B cell (primary cell): ENCODE measurements at regions of chr1 and their contacts with region 1.

Region 1: GRCh38 chr1:227999056-227999930 is 7.5 kb upstream of the WNT3A start:
- DNase-seq: peak; percentile 71
- ATAC-seq: peak; percentile 82
- H3K4me3 ChIP-seq: no peak overlapping the region
- H3K4me3 Mint-ChIP-seq: no peak overlapping the region
- H3K27ac ChIP-seq: no peak overlapping the region
- H3K27ac Mint-ChIP-seq: no peak overlapping the region
- H3K4me1 ChIP-seq: no peaks in the 10 kb centered on the region
- H3K4me1 Mint-ChIP-seq: no peaks in the 10 kb centered on the region
- H3K27me3 ChIP-seq: peaks cover 0 to 20% (median 10%) of the 10 kb centered on the region in 4 experiments
- H3K27me3 Mint-ChIP-seq: peaks cover 29% of the 10 kb centered on the region
- CTCF ChIP-seq: peak; percentile 72

Region 2: GRCh38 chr1:228165372-228166169 is 166.3 kb after region 1 on chr1 and contains the start of gene IBA57:
- CTCF ChIA-PET with region 1: interaction called, 10 read pairs
- POLR2A ChIA-PET with region 1: no interaction called
- intact Hi-C with region 1: no loop called
- DNase-seq: peak; percentile 100
- ATAC-seq: peak; percentile 84
- H3K4me3 ChIP-seq: peak within 1 kb of the TSS; percentile 64 to 88 (median 74)
- H3K4me3 Mint-ChIP-seq: peak within 1 kb of the TSS; percentile 93
- H3K27ac ChIP-seq: peak within 1 kb of the TSS; percentile 95 to 98
- H3K27ac Mint-ChIP-seq: peak within 1 kb of the TSS; percentile 99
- H3K4me1 ChIP-seq: peaks cover 14 to 26% of the 10 kb centered on the region in 2 donors
- H3K4me1 Mint-ChIP-seq: peaks cover 28% of the 10 kb centered on the region
- H3K27me3 ChIP-seq: peaks cover 0 to 5% (median 0%) of the 10 kb centered on the region in 4 experiments
- H3K27me3 Mint-ChIP-seq: no peaks in the 10 kb centered on the region
- CTCF ChIP-seq: peak; percentile 73
- total RNA-seq, gene IBA57: 12.8 and 15.3 TPM in 2 replicates

Region 3: DNA sequence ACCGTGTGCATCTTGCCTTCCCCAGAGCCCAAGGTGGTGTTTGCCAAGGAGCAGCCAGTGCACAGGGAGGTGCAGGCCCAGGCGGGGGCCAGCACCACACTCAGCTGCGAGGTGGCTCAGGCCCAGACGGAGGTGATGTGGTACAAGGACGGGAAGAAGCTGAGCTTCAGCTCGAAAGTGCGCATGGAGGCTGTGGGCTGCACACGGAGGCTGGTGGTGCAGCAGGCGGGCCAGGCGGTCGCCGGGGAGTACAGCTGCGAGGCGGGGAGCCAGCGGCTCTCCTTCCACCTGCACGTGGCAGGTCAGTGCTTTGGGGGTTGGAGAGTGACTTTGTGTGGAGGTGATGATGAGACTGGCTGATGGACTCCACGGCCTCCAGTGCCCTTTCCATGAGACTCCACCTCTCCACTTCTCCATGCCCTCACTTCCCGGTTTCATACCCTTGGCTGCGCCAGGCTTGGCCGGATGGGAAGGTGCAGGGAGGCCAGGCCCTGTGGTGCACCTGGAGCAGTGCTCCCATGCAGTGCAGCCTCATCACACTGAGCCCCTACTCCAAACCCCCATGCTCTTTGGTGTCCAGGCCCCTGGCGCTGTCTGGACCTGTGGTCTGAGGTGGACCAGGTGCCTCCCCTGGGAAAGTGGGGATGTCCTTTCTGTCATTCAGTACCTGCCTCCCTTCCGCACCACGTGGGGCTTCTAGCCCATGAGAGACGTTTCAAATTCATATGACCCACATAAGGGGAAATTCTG is 257.5 kb after region 1 on chr1:
- CTCF ChIA-PET with region 1: no interaction called
- POLR2A ChIA-PET with region 1: no interaction called
- intact Hi-C with region 1: no loop called
- DNase-seq: no peak
- ATAC-seq: no peak
- H3K4me3 ChIP-seq: no peak overlapping the region
- H3K4me3 Mint-ChIP-seq: no peak overlapping the region
- H3K27ac ChIP-seq: no peak overlapping the region
- H3K27ac Mint-ChIP-seq: no peak overlapping the region
- H3K4me1 ChIP-seq: no peaks in the 10 kb centered on the region
- H3K4me1 Mint-ChIP-seq: no peaks in the 10 kb centered on the region
- H3K27me3 ChIP-seq: no peaks in the 10 kb centered on the region
- H3K27me3 Mint-ChIP-seq: no peaks in the 10 kb centered on the region
- CTCF ChIP-seq: no peak

Region 4: GRCh38 chr1:228515200-228515834 is 516.0 kb after region 1 on chr1:
- CTCF ChIA-PET with region 1: interaction called, 6 read pairs
- POLR2A ChIA-PET with region 1: no interaction called
- intact Hi-C with region 1: loop called (anchors 1 kb)
- DNase-seq: peak; percentile 64
- ATAC-seq: peak; percentile 28
- H3K4me3 ChIP-seq: no peak overlapping the region
- H3K4me3 Mint-ChIP-seq: no peak overlapping the region
- H3K27ac ChIP-seq: no peak overlapping the region
- H3K27ac Mint-ChIP-seq: no peak overlapping the region
- H3K4me1 ChIP-seq: no peaks in the 10 kb centered on the region
- H3K4me1 Mint-ChIP-seq: no peaks in the 10 kb centered on the region
- H3K27me3 ChIP-seq: peaks cover 0 to 17% (median 4%) of the 10 kb centered on the region in 4 experiments
- H3K27me3 Mint-ChIP-seq: peaks cover 38% of the 10 kb centered on the region
- CTCF ChIP-seq: peak; percentile 82